PC-9 (cell line): ENCODE measurements at regions of chr20 and their contacts with region 1.

Region 1: GRCh38 chr20:34861386-34862084 is 11.1 kb downstream of the GGT7 start:
- DNase-seq: peak; percentile 76 to 88
- H3K4me3 ChIP-seq: no peak overlapping the region
- H3K27ac ChIP-seq: no peak overlapping the region
- H3K4me1 ChIP-seq: peaks cover 21% of the 10 kb centered on the region
- H3K27me3 ChIP-seq: no peaks in the 10 kb centered on the region
- CTCF ChIP-seq: no peak

Region 2: DNA sequence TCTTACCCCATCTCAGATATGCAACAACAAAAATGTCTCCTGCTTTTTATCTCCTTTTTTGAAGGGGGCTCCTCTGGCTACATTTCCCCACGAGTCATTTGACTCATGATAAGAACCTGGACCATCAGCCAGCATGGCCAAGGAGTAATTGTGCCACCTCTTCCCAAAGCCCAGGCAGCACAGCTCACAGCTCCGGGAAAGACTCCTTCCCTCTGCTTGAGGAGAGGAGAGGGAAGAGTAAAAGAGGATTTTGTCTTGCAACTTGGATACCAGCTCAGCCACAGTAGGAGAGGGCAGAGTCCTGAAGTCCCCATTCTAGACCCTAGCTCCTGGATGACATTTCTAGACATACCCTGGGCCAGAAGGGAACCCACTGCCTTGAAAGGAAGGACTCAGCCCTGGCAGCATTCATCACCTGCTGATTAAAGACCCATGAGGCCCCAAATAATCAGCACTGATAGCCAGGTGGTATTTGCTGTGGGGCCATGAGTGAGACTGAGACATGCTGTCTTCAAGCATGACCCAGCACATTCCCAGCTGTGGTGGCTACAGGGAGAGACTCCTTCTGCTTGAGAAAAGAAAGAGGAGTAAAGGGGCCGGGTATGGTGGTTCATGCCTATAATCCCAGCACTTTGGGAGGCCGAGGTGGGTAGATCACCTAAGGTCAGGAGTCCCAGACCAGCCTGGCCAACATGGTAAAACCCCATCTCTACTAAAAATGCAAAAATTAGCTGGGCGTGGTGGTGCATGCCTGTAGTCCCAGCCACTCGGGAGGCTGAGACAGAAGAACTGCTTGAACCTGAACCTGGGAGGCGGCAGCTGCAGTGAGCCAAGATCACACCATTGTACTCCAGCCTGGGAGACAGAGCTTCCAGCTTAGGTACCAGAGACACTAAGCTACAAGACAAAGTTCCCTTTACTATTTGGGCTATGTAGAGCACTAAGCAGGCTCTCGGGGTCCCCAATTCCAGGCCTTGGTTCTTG is 64.2 kb before region 1 on chr20:
- CTCF ChIA-PET with region 1: no interaction called
- POLR2A ChIA-PET with region 1: no interaction called
- intact Hi-C with region 1: no loop called
- DNase-seq: no peak
- H3K4me3 ChIP-seq: no peak overlapping the region
- H3K27ac ChIP-seq: no peak overlapping the region
- H3K4me1 ChIP-seq: peaks cover under 1% of the 10 kb centered on the region; the same call in 1 of the 2 replicates
- H3K27me3 ChIP-seq: no peaks in the 10 kb centered on the region
- CTCF ChIP-seq: no peak

Region 3: GRCh38 chr20:34815636-34816035 is 45.9 kb before region 1 on chr20:
- CTCF ChIA-PET with region 1: interaction called, 11 read pairs
- POLR2A ChIA-PET with region 1: no interaction called
- intact Hi-C with region 1: no loop called
- DNase-seq: no peak
- H3K4me3 ChIP-seq: no peak overlapping the region
- H3K27ac ChIP-seq: no peak overlapping the region
- H3K4me1 ChIP-seq: no peaks in the 10 kb centered on the region
- H3K27me3 ChIP-seq: no peaks in the 10 kb centered on the region
- CTCF ChIP-seq: no peak

Region 4: GRCh38 chr20:35001596-35002362 is 140.2 kb after region 1 on chr20:
- CTCF ChIA-PET with region 1: no interaction called
- POLR2A ChIA-PET with region 1: no interaction called
- intact Hi-C with region 1: no loop called
- DNase-seq: no peak
- H3K4me3 ChIP-seq: no peak overlapping the region
- H3K27ac ChIP-seq: no peak overlapping the region
- H3K4me1 ChIP-seq: no peaks in the 10 kb centered on the region
- H3K27me3 ChIP-seq: no peaks in the 10 kb centered on the region
- CTCF ChIP-seq: no peak; the same call in 1 of the 2 replicates